ENCODE measurements at regions of chr6 and their contacts with region 1.

Region 1: DNA sequence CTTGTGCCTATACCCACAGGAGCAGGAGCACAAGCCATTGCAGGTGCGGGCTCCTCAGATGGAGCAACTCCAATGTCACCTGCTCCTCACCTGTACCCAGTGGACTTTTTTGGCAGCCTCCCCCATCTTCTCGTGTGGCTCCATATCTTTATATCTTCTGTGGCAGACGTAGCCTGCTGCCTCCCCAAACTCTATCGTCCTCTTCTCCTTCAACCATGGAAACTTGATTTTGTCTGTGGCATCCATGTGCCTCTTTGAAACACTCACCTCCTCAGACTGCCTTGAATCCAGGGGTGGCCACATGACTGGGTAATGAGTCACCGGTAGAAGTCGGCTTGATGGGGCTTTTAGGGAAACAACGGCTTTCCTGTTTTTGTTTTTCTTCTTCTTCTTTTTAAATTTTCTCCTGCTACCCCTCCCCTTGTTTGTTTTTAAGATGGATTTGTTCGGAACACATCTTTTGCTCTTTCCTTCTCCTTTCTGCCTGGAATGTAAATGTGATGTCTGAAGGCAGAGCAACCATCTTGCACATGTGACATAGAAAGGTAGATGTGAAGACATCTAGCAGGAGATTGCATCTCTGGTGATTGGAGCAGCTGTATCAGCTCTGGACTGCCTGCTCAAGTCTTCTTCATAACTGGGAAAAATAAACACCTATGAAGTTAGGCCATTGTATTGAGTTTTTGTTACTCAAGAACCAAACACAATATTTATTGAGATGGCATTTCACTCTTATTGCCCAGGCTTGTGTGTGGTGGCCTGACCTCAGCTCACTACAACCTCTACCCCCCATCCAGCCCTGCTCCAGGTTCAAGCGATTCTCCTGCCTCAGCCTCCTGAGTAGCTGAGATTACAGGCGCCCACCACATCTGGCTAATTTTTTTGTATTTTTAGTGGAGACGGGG is 69.9 kb upstream of the DDR1 start:
- DNase-seq: peak; percentile 81
- H3K4me3 Mint-ChIP-seq: peak overlapping the region; percentile 48
- H3K27ac Mint-ChIP-seq: peak overlapping the region; percentile 95
- H3K4me1 Mint-ChIP-seq: peaks cover 94% of the 10 kb centered on the region
- H3K27me3 Mint-ChIP-seq: no peaks in the 10 kb centered on the region

Region 2: DNA sequence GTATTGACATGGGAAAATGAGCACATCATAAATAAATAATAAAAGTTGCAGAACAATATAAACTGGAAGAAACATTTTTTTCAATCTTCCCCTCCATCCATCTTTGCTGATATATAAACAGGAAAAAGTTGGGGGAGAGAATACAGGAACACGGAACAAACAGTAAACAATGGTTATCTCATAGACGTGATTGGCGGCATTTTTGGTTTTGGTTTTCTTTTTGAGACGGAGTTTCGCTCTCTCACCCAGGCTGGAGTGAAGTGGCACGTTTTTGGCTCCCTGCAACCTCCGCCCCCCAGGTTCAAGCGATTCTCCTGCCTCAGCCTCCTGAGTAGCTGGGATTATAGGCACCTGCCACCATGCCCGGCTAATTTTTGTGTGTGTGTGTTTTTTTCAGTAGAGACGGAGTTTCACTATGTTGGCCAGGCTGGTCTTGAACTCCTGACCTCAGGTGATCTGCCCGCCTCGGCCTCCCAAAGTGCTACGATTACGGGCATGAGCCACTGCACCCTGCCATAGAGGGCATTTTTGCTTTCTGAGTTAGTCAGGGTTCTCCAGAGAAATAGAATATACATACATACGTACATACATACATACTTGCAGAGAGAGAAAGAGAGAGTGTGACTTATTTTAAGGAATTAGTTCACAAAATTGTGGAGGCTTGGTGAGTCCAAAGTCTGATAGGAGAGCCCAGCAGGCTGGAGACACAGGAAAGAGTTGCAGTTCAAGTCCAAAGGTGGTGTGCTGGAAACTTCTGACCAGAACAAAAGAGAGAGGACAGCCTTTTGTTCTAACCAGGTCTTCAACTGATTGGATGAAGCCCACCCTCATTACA is 280.7 kb before region 1 on chr6:
- CTCF ChIA-PET with region 1: no interaction called
- intact Hi-C with region 1: loop called (anchors 5 kb)
- DNase-seq: no peak
- H3K4me3 Mint-ChIP-seq: peak overlapping the region; percentile 27
- H3K27ac Mint-ChIP-seq: peak overlapping the region; percentile 93
- H3K4me1 Mint-ChIP-seq: peaks cover 49% of the 10 kb centered on the region
- H3K27me3 Mint-ChIP-seq: no peaks in the 10 kb centered on the region

Region 3: GRCh38 chr6:30730601-30731435 is 83.6 kb before region 1 on chr6:
- CTCF ChIA-PET with region 1: interaction called, 6 read pairs
- intact Hi-C with region 1: loop called (anchors 1 kb)
- DNase-seq: peak; percentile 94
- H3K4me3 Mint-ChIP-seq: peak overlapping the region; percentile 29
- H3K27ac Mint-ChIP-seq: no peak overlapping the region
- H3K4me1 Mint-ChIP-seq: peaks cover 47% of the 10 kb centered on the region
- H3K27me3 Mint-ChIP-seq: no peaks in the 10 kb centered on the region

Region 4: GRCh38 chr6:30769088-30769852 is 45.1 kb before region 1 on chr6:
- CTCF ChIA-PET with region 1: interaction called, 28 read pairs
- intact Hi-C with region 1: loop called (anchors 1 kb)
- DNase-seq: peak; percentile 85
- H3K4me3 Mint-ChIP-seq: peak overlapping the region; percentile 62
- H3K27ac Mint-ChIP-seq: peak overlapping the region; percentile 97
- H3K4me1 Mint-ChIP-seq: peaks cover 79% of the 10 kb centered on the region
- H3K27me3 Mint-ChIP-seq: no peaks in the 10 kb centered on the region

Region 5: DNA sequence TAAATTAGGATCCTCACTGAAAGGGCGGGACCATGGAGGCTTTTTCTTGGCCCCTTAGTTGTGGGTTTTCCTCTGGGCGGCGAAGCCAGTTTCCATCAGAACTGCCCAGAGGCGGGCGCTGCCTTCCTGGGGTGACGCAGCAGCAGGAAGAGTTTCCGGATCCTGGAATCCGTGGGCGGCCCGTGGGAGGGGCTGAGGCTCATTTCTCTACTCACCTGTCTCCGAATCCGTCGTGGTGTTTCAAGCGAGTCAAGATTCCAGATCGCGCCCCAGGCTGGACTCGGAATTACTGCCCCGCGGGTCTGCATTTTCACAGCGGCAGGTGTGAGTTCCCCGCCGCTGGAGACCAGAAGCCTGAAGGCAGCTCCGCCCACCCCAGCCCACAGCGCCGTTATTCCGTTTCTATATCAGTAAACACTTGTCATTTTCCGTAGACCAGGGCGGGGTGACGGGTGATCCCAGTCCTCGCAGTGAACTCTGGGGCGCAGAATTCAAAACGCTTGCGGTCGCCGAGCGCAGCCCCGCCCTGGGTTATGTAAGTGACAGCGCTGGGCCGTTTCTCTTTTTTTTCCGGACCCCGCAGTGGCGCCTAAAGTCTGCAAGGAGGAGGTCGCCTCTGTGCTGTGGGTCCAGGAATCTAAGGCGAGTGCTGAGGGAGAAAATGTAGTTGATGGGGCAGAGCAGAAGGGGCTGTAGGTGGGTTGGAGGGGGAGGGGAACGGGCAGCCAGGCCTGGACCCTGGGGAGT is 383.3 kb after region 1 on chr6:
- CTCF ChIA-PET with region 1: no interaction called
- intact Hi-C with region 1: loop called (anchors 5 kb)
- DNase-seq: peak; percentile 98
- H3K4me3 Mint-ChIP-seq: peak overlapping the region; percentile 83
- H3K27ac Mint-ChIP-seq: peak overlapping the region; percentile 97
- H3K4me1 Mint-ChIP-seq: peaks cover 57% of the 10 kb centered on the region
- H3K27me3 Mint-ChIP-seq: no peaks in the 10 kb centered on the region